ENCODE measurements at regions of chr4 and their contacts with region 1.

Region 1: DNA sequence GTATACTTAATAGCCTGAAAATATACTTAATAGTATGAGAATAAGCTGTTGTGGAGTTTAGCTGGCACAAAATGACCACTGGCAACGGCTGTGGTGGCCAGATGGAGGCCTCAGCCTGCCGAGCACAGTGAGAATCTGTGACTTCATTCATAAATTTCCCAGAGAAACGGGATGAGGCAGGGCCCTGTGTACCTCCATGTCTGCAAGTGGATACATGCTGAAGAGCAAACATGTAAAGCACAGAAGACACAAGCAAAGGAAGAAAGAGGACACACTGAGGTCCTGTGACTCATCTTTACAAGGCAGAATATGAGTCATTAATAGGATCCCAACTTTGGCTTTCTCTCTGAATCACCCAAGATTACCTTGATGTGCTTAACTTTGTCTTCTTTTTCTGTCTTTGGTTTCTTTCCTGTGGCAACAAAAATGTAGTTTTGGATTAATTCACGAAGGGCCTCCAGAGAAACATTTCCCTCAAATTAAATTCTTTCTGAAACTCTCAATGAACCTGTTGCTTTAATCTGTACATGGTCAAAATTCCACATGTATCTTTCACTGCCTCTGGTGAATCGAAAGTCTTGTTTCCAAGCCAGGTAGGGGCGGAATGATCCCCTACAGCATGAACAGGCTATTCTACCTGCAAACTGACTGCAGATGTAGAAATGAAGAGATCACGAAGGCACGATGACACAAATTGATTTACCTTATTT is 56.4 kb downstream of the IRF2 start:
- DNase-seq: peak; percentile 77
- H3K4me3 Mint-ChIP-seq: peak overlapping the region; percentile 56
- H3K27ac Mint-ChIP-seq: peak overlapping the region; percentile 86
- H3K4me1 Mint-ChIP-seq: peaks cover 68% of the 10 kb centered on the region
- H3K27me3 Mint-ChIP-seq: no peaks in the 10 kb centered on the region

Region 2: DNA sequence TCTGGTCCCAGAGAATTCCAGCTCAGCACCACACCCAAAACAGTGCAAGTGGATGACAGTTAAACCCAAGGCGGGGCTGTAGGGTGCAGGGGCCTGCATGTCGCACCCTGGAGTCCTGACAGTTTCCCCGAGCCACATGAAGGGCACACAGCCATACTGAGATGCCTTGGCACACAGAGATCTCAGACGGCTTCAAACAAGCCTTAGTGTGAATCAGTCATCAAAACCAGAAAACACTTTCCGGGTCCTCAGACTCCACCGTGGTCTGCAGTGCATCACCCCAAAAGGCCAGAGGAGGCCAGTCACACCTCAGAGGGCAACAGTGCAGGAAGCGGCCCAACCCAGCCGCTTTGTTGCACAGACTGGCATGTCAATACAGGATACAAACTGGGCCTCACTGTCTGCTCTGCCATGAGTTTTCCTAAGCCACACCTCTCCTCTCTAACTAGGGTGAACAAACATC is 135.7 kb before region 1 on chr4:
- intact Hi-C with region 1: loop called (anchors 1 kb)
- DNase-seq: peak; percentile 87
- H3K4me3 Mint-ChIP-seq: peak overlapping the region; percentile 66
- H3K27ac Mint-ChIP-seq: peak overlapping the region; percentile 90
- H3K4me1 Mint-ChIP-seq: peaks cover 62% of the 10 kb centered on the region
- H3K27me3 Mint-ChIP-seq: no peaks in the 10 kb centered on the region

Region 3: GRCh38 chr4:184287697-184288255 is 130.2 kb before region 1 on chr4:
- intact Hi-C with region 1: loop called (anchors 1 kb)
- DNase-seq: peak; percentile 64
- H3K4me3 Mint-ChIP-seq: peak overlapping the region; percentile 57
- H3K27ac Mint-ChIP-seq: peak overlapping the region; percentile 89
- H3K4me1 Mint-ChIP-seq: peaks cover 45% of the 10 kb centered on the region
- H3K27me3 Mint-ChIP-seq: no peaks in the 10 kb centered on the region

Region 4: DNA sequence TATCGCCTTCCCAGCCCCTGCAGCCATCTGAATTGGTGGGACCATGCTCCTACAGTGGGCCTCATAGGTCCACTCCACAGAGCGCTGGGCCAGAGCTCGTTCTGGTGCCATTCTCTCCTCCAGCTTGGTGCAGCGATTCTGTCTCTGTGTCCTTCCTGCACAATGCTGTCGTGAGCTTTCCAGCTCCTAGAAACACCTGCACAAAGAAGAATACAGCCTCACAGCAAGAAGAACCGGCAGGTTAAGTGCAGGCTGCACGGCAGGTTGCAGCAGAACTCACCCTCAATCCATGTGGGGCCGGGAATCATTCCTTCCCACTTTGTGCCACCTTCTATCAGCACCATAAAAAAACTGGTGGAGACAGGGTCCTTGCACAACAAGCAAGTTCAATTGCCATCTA is 99.1 kb before region 1 on chr4:
- intact Hi-C with region 1: loop called (anchors 1 kb)
- DNase-seq: peak; percentile 56
- H3K4me3 Mint-ChIP-seq: peak overlapping the region; percentile 21
- H3K27ac Mint-ChIP-seq: peak overlapping the region; percentile 93
- H3K4me1 Mint-ChIP-seq: peaks cover 50% of the 10 kb centered on the region
- H3K27me3 Mint-ChIP-seq: no peaks in the 10 kb centered on the region

Region 5: GRCh38 chr4:184383497-184384055 is 34.4 kb before region 1 on chr4:
- intact Hi-C with region 1: loop called (anchors 2 kb)
- DNase-seq: no peak
- H3K4me3 Mint-ChIP-seq: peak overlapping the region; percentile 56
- H3K27ac Mint-ChIP-seq: peak overlapping the region; percentile 69
- H3K4me1 Mint-ChIP-seq: peaks cover 55% of the 10 kb centered on the region
- H3K27me3 Mint-ChIP-seq: no peaks in the 10 kb centered on the region

Region 6: DNA sequence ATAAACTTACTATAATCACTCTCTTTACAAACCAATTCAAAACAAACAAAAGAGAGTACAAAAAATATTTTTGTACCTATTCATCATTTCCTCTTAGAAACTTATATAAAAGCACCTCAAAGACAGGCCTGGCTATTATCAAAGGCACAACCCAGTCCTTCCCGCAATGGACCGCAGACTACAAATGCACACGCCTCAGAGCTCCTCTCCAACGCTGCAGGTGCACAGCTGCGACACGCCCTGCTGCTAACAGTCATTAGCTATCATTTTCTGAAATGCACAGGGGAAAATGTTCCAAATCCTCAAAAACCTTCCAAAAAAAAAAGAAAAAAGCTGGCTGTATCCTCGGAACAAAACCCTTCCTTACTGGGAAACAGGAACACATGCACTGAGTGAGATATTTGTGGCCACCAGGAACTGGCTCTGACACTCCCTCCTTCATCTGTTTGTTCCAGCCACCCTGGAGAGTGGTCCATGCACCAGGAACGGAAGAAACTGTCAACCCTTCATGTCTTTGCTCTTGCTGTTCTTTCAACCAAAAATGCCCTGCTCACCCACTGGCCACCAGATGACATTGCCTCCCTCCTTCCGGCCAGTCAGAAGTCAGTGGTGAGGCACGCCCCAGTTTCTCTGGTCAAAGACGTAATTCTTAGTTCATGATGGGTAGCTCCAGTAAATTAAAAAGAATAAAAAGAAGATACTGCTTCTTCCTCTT is 39.7 kb after region 1 on chr4:
- intact Hi-C with region 1: loop called (anchors 2 kb)
- DNase-seq: no peak
- H3K4me3 Mint-ChIP-seq: no peak overlapping the region
- H3K27ac Mint-ChIP-seq: peak overlapping the region; percentile 18
- H3K4me1 Mint-ChIP-seq: peaks cover 60% of the 10 kb centered on the region
- H3K27me3 Mint-ChIP-seq: no peaks in the 10 kb centered on the region

Region 7: GRCh38 chr4:184514121-184514988 is 96.4 kb after region 1 on chr4:
- intact Hi-C with region 1: loop called (anchors 1 kb)
- DNase-seq: peak; percentile 84
- H3K4me3 Mint-ChIP-seq: peak overlapping the region; percentile 65
- H3K27ac Mint-ChIP-seq: peak overlapping the region; percentile 84
- H3K4me1 Mint-ChIP-seq: peaks cover 40% of the 10 kb centered on the region
- H3K27me3 Mint-ChIP-seq: no peaks in the 10 kb centered on the region

Measured in activated CD4-positive, alpha-beta T cell treated with anti-CD3 and anti-CD28 coated beads, Interleukin-2, amount 10 ng/mL, durations not matched to agents 24 days and 14 days (primary cell).